ENCODE measurements at regions of chr4 and their contacts with region 1.

Region 1: DNA sequence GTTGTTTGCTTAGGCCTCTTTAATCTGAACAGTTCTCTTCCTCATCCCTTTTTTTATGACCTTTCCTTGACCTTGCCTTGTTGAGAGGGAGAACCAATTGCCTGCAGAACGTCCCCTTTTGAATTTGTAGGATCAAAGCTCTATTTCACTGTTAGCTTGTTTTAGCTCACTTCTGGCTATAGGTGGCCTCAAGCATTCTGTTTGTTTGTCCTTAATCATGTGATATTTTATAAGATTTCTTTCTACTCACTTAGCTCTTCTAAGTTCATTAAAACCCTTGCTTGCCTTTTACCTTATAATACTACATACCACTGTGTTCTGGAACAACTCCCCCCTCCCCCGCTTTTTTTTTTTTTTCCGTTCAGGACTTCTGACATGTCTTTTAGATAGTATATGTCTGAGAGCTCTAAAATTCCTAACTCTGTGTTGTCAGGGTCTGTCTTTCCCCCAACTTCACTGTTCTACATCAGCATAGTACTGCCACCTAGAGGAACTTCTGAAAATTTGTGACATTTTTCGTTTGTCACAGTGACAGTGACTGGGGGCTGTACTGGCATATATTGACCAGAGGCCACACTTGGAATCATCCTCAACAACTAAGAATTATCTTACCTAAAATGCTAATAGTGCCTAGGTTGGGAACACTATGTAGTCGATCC is 128.5 kb downstream of the LARP7 start:
- DNase-seq: peak; percentile 4
- ATAC-seq: peak; percentile 74
- H3K4me3 Mint-ChIP-seq: no peak overlapping the region
- H3K27ac Mint-ChIP-seq: no peak overlapping the region
- H3K4me1 Mint-ChIP-seq: no peaks in the 10 kb centered on the region
- H3K27me3 Mint-ChIP-seq: no peaks in the 10 kb centered on the region
- CTCF ChIP-seq: peak; percentile 60

Region 2: DNA sequence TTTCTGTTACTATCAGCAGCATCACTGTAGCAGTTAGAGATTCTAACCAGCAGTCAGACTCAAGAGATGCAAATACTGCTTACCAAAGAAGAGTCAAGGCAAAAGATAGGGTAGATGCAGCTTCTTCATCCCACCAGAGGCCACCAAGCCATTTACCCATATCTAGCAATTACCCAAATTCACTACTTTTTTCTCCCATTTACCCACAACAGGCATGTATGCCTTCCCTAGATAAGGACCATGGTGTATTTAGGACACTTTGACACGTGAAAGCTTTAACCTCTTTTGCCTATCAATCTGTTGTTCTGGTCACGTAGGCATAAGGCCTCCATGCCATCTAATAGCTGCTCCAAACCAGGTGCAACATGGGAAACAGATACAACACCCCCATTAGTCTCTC is 122.9 kb before region 1 on chr4:
- CTCF ChIA-PET with region 1: interaction called, 56 read pairs
- POLR2A ChIA-PET with region 1: interaction called, 3 read pairs
- intact Hi-C with region 1: no loop called
- DNase-seq: no peak
- ATAC-seq: no peak
- H3K4me3 Mint-ChIP-seq: no peak overlapping the region
- H3K27ac Mint-ChIP-seq: no peak overlapping the region
- H3K4me1 Mint-ChIP-seq: peaks cover 20% of the 10 kb centered on the region
- H3K27me3 Mint-ChIP-seq: no peaks in the 10 kb centered on the region
- CTCF ChIP-seq: no peak

Region 3: GRCh38 chr4:112655270-112655669 is 110.2 kb before region 1 on chr4:
- CTCF ChIA-PET with region 1: interaction called, 20 read pairs
- POLR2A ChIA-PET with region 1: no interaction called
- intact Hi-C with region 1: no loop called
- DNase-seq: no peak
- ATAC-seq: no peak
- H3K4me3 Mint-ChIP-seq: no peak overlapping the region
- H3K27ac Mint-ChIP-seq: no peak overlapping the region
- H3K4me1 Mint-ChIP-seq: no peaks in the 10 kb centered on the region
- H3K27me3 Mint-ChIP-seq: no peaks in the 10 kb centered on the region
- CTCF ChIP-seq: no peak

Region 4: GRCh38 chr4:112775801-112776200 is 10.4 kb after region 1 on chr4:
- CTCF ChIA-PET with region 1: interaction called, 13 read pairs
- POLR2A ChIA-PET with region 1: interaction called, 3 read pairs
- intact Hi-C with region 1: no loop called
- DNase-seq: no peak
- ATAC-seq: no peak
- H3K4me3 Mint-ChIP-seq: no peak overlapping the region
- H3K27ac Mint-ChIP-seq: no peak overlapping the region
- H3K4me1 Mint-ChIP-seq: no peaks in the 10 kb centered on the region
- H3K27me3 Mint-ChIP-seq: no peaks in the 10 kb centered on the region
- CTCF ChIP-seq: no peak